Activated naive CD4-positive, alpha-beta T cell treated with anti-CD3 and anti-CD28 coated beads for 36 hours (primary cell): ENCODE measurements at regions of chr3 and their contacts with region 1.

Region 1: GRCh38 chr3:151168269-151169094 is 34.5 kb downstream of the GPR171 start:
- DNase-seq: peak; percentile 93
- H3K4me3 Mint-ChIP-seq: no peak overlapping the region
- H3K27ac Mint-ChIP-seq: no peak overlapping the region
- H3K4me1 Mint-ChIP-seq: peaks cover 37% of the 10 kb centered on the region
- H3K27me3 Mint-ChIP-seq: no peaks in the 10 kb centered on the region

Region 2: GRCh38 chr3:151183265-151183671 is 14.8 kb after region 1 on chr3:
- CTCF ChIA-PET with region 1: interaction called, 14 read pairs
- intact Hi-C with region 1: no loop called
- DNase-seq: no peak
- H3K4me3 Mint-ChIP-seq: peak overlapping the region; percentile 62
- H3K27ac Mint-ChIP-seq: peak overlapping the region; percentile 51
- H3K4me1 Mint-ChIP-seq: peaks cover 44% of the 10 kb centered on the region
- H3K27me3 Mint-ChIP-seq: no peaks in the 10 kb centered on the region

Region 3: DNA sequence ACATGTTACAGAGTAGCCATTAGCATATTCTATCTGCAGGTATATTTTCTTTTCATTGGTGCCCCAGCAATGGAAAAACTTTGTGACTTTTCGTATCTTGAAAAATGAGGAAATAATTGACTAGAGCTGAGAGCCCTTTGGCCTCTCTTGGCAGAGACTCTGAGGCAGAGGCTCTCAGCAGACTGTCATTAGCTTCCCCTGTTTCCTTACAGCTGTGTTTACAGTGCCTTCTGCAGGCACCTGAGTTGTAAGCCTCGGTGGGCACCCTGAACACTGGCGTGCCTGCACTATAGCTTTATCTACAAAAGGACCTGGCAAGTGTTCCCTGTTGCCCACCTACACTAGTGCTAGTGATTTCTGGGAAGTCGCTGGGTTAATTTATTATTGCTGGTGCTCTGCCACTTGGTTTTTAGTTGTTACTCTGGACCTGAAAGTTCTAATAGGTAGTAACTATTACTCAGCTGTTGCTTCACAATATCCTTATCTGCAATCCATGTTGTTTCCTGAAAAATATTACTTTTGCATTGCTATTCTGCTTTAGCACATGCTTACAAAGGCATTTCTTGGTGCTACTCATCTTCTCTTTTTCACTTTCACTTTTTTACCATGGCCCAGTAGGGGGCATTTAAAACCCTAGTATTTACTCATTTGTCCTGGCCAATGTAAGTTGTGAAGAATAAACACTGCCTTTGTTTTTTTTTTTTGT is 42.3 kb after region 1 on chr3:
- CTCF ChIA-PET with region 1: interaction called, 52 read pairs
- intact Hi-C with region 1: loop called (anchors 1 kb)
- DNase-seq: peak; percentile 31
- H3K4me3 Mint-ChIP-seq: peak overlapping the region; percentile 48
- H3K27ac Mint-ChIP-seq: peak overlapping the region; percentile 90
- H3K4me1 Mint-ChIP-seq: peaks cover 56% of the 10 kb centered on the region
- H3K27me3 Mint-ChIP-seq: no peaks in the 10 kb centered on the region

Region 4: DNA sequence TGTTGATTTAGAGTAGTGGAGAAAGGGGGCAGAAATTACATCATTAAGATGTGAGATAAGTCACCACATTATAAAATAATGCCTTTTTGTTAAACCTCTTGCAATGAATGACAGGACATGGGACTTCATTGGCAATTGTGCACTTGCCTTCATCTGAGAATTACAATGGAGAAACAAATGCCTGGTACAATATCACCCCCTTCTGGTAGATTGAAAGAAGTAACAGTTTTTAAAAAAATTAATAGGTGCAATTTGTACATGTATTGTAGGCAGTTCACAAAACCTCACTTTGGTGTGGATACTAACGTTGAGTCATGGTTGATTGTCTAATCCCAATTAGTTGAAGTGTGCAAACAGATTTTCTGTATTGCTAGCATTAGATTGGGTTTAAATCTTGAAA is 114.4 kb after region 1 on chr3:
- CTCF ChIA-PET with region 1: interaction called, 191 read pairs
- intact Hi-C with region 1: loop called (anchors 1 kb)
- DNase-seq: no peak
- H3K4me3 Mint-ChIP-seq: no peak overlapping the region
- H3K27ac Mint-ChIP-seq: no peak overlapping the region
- H3K4me1 Mint-ChIP-seq: peaks cover 28% of the 10 kb centered on the region
- H3K27me3 Mint-ChIP-seq: no peaks in the 10 kb centered on the region

Region 5: GRCh38 chr3:151327571-151328198 is 159.2 kb after region 1 on chr3:
- CTCF ChIA-PET with region 1: interaction called, 23 read pairs
- intact Hi-C with region 1: loop called (anchors 1 kb)
- DNase-seq: no peak
- H3K4me3 Mint-ChIP-seq: no peak overlapping the region
- H3K27ac Mint-ChIP-seq: no peak overlapping the region
- H3K4me1 Mint-ChIP-seq: peaks cover 7% of the 10 kb centered on the region
- H3K27me3 Mint-ChIP-seq: peaks cover 4% of the 10 kb centered on the region

Region 6: GRCh38 chr3:151501923-151502632 is 333.6 kb after region 1 on chr3:
- CTCF ChIA-PET with region 1: no interaction called
- intact Hi-C with region 1: no loop called
- DNase-seq: no peak
- H3K4me3 Mint-ChIP-seq: no peak overlapping the region
- H3K27ac Mint-ChIP-seq: no peak overlapping the region
- H3K4me1 Mint-ChIP-seq: no peaks in the 10 kb centered on the region
- H3K27me3 Mint-ChIP-seq: no peaks in the 10 kb centered on the region

Region 7: DNA sequence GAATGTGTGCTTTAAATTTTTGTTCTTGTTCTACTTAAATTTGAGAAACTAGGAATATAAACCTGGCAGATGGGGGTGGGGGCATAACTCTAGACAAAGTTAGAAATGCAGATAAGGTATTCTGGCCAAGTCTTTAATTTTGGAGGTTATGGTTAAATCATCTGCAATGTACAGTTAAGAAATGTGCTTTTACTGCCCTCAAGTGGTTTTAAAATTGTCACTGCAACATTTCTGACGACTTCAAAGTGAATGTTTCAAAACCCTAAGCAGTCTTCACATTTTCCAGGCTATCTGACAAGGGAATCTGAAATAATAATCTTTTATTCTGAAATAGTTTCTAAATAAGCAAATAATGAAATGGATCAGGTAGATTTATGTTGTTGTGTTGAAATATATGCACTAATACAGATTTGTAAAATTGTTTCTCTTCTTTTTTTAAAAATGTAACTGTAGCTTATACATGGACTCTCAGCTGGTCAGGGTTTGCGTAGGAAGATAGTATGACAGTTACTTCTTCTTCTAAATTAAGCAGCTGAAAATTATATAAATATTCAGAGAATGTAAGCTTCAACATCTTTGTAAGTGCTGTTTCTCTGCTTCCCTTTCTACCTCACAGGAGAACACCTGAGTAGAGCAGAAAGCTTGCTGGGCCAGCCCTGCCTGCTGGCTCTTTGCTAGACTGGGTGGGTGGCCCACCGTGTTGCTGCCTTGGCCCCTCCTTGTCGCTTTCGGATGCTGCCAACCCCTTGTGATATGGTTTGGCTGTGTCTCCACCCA is 750.0 kb after region 1 on chr3:
- CTCF ChIA-PET with region 1: no interaction called
- intact Hi-C with region 1: loop called (anchors 2 kb)
- DNase-seq: no peak
- H3K4me3 Mint-ChIP-seq: no peak overlapping the region
- H3K27ac Mint-ChIP-seq: no peak overlapping the region
- H3K4me1 Mint-ChIP-seq: no peaks in the 10 kb centered on the region
- H3K27me3 Mint-ChIP-seq: no peaks in the 10 kb centered on the region